Heart right ventricle (tissue), 16 donors: ENCODE measurements at regions of chr2 and their contacts with region 1.

Region 1: DNA sequence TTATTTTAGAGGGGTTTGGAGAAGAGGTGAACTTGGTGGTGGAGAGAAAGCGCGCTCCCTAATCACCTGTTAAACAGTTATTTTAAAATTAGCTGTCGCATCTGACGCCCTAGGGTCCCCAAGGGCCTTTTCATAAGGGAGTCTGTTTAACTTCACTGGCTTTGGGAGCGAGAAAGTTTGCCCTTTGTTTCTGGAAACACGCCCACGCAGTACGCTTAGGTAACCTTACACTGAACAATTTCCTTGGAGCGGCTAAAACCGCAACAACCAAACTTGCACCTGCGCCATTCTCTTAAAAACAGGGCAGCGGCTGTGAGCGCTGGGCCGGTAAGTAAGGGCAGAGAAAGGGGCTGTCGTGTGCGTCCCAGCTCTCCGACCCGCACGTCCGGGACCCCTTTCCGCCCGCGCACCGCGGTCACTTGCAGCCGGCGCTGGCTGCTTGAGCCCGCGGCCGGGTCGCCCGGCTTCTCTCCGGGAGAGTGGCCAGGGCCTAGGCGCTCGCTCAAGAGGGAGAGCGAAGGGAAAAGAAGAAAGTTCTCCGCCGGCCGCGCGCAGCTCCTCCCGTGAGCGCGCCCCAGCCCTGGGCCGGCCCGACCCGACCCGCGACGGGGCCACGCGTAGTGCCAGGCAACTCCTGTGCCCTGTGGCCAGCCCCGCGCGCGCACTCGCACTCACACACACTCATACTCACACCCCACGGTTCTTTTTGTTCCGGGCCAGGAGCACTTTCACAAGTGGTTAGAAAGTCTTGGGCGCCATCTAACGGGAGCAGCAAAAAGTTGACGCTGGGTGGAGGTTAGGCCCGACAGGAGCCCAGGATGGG is 19.2 kb downstream of the POU3F3 start:
- DNase-seq: peak in 1 of 2 donors; percentile 70
- ATAC-seq: peak; percentile 75 to 89 (median 84)
- H3K4me3 ChIP-seq: peak overlapping the region in 9 of 10 donors; percentile 43 to 68 (median 58)
- H3K27ac ChIP-seq: no peak overlapping the region
- H3K4me1 ChIP-seq: peaks cover 2 to 18% (median 13%) of the 10 kb centered on the region in 9 donors
- H3K27me3 ChIP-seq: peaks cover 14 to 93% (median 90%) of the 10 kb centered on the region in 7 donors
- CTCF ChIP-seq: peak in 8 of 9 donors; percentile 44 to 75 (median 56)

Region 2: DNA sequence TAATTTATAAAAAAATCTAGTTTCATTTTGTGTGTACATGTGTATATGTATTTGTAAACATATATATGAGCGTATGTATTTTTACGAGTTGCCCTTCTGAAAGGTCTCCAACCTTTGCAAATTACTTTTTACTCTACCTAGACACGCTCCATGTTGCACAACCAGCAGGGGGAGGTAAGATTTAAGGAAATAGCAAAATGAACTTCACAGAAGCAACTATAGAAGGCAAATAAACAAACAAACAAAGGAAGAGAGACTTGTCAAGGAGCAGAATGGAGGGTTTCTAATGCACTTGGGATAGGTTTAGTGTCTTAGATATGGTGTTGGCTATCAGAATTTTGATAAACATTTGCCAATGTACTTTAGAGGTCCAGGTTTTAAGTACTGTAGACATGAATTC is 839.7 kb before region 1 on chr2:
- intact Hi-C with region 1: loop called in 1 of 10 experiments (anchors 5 kb)
- DNase-seq: no peak
- ATAC-seq: no peak
- H3K4me3 ChIP-seq: no peak overlapping the region
- H3K27ac ChIP-seq: no peak overlapping the region
- H3K4me1 ChIP-seq: no peaks in the 10 kb centered on the region
- H3K27me3 ChIP-seq: peaks cover 0 to 22% (median 0%) of the 10 kb centered on the region in 7 donors
- CTCF ChIP-seq: peak in 6 of 9 donors; percentile 22 to 47 (median 26)

Region 3: DNA sequence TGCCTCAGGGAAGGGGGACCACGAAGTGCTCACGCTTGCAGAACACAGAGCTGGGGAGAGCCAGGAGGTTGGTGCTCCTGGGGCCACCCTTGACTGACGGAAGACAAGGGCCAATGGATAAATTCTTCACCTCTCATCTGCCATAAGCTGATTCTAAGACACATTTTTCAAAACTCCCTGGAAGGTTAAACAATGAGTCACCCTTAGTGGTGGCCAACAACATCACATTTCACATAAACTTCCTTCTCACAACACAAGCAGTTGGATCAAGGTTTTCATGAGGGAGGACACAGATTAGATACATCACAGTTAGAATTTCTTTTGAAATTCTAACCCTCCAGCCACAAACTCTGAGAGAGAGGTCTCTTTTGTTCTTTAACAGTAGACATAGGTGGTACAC is 732.7 kb before region 1 on chr2:
- intact Hi-C with region 1: loop called in 1 of 10 experiments (anchors 5 kb)
- DNase-seq: no peak
- ATAC-seq: no peak
- H3K4me3 ChIP-seq: no peak overlapping the region
- H3K27ac ChIP-seq: no peak overlapping the region
- H3K4me1 ChIP-seq: no peaks in the 10 kb centered on the region
- H3K27me3 ChIP-seq: peaks cover 0 to 4% (median 0%) of the 10 kb centered on the region in 7 donors
- CTCF ChIP-seq: no peak

Region 4: DNA sequence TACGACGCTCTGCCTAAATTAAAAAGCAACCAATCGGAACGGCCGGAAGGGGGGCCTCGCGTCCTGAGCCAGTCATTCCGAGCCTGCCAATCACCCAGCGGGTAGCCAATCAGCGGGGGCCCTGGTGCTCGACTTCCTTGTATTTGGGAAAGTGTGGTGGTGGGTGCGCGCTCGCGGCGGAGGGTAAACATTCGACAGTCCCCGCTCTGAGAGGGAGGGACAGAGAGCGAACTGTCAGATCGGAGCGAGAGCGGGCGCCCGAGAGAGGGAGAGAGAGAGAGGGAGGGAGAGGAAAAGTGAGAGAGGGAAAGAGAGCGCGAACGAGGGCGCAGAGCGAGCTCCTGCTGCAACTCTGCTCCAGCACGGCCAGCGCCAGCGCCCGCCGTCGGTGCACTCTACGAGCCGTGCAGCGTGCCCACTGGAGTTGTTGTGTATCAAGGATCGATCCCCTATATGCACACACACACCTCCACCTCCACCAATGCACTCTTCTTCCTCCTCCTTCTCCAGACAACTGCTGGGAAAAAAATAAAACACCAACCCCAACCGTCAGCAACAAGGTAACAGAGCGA is 19.1 kb before region 1 on chr2 and contains the start of gene POU3F3:
- intact Hi-C with region 1: no loop called
- DNase-seq: peak; percentile 51 to 86
- ATAC-seq: peak; percentile 40 to 92 (median 76)
- H3K4me3 ChIP-seq: peak within 1 kb of the TSS in 9 of 10 donors; percentile 18 to 56 (median 46)
- H3K27ac ChIP-seq: peak within 1 kb of the TSS in 1 of 10 donors; percentile 22
- H3K4me1 ChIP-seq: peaks cover 2 to 50% (median 38%) of the 10 kb centered on the region in 9 donors
- H3K27me3 ChIP-seq: peaks cover 43 to 90% (median 88%) of the 10 kb centered on the region in 7 donors
- CTCF ChIP-seq: no peak
- total RNA-seq, gene POU3F3: 0.08 to 0.61 (median 0.12) TPM in 5 of 10 donors, not detected in the others